ENCODE measurements at regions of chr2 and their contacts with region 1.

Region 1: GRCh38 chr2:46296840-46297545 is at the start of gene EPAS1:
- DNase-seq: peak; percentile 98
- total RNA-seq, gene EPAS1: 139 TPM

Region 2: DNA sequence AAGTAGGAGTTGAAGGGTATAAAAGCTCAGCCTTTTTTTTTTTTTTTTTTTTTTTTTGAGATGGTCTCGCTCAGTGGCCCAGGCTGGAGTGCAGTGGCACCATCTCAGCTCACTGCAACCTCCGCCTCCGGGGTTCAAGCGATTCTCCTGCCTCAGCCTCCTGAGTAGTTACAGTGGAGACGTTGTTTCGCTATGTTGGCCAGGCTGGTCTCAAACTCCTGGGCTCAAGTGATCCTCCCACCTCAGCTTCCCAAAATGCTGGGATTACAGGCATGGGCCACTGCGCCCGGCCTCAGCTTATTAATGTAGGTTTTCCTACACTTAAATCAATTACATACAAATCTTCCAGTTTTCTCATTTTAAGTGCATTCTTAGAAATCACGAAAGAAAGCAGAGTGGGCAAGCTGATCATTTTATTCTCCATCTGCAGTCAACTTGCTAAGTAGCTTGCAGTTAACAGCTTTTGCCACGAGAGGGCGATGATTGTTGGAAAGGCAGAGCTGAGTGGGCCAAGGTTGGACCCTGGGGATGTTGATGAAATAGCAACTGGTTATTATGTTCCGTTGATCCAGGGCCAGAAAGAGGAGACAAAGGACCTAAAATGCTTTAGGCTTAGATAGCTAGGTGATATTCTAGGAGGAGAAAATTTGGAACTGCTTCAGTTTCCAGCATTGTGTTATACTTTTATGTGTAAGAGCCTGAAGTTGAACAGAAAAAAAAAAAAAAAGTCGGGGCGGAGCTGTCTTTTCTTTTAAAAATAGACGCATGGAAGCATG is 234.2 kb before region 1 on chr2:
- intact Hi-C with region 1: loop called (anchors 5 kb)
- DNase-seq: peak; percentile 90

Region 3: DNA sequence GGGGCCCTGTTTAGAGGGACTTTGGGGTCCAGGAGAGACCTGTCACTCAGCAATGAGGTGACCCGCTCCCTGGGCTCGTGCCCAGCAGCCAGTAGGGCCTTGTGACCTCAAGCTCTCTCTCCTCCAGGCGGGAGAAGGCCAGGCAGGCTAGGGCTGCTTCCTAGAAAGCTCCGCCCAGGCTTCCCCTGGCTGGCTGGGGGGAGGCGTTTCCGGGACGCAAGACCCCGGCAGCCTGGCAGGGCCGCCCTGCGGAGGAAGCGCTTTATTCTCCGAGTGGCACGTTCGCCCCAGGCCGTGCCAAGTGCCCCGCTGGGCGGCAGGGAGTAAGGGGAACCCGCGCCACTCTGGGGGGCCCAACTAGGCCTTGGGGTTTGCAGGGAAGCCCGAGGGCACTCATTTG is 21.0 kb before region 1 on chr2:
- intact Hi-C with region 1: loop called (anchors 2 kb)
- DNase-seq: peak; percentile 81

Region 4: DNA sequence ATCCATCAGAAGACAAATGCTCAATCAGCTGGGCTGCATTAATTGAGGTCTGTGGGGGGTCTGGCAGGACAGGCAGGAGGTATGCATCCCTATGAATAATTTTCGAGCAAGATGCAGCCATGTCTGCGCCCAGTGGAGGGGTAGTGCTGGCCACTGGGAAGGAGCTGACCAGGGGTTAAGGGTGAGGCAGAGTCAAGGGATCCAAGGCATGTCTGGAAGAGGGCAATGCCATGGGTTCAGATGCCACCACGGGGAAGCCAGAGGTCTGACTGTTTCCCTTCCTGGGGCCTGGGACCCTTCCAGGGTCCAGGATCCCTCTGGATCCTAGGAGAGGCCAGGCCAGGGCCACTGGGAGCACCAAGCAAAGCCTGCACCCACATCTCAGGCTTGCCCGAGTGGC is 10.8 kb before region 1 on chr2:
- intact Hi-C with region 1: no loop called
- DNase-seq: no peak

Region 5: DNA sequence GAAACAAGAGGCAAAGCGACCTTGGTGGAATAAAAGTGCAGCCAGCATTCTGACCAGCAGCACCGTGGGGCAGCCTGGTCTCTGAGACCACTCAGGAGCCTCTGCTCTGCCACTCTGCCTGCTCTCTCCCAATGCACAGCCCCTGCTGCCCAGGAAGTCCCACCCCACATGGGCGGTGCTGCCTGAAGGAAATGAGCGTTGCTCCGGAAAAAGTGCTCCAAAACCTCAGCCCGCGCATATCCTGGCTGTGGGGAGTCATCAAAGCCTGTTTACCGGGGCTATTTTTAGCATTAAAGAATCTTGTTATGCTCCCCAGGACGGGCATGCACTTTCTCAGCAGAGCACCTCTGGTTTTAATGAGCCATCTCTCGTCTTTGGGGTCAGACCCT is 54.8 kb after region 1 on chr2:
- intact Hi-C with region 1: loop called (anchors 5 kb)
- DNase-seq: no peak

Region 6: DNA sequence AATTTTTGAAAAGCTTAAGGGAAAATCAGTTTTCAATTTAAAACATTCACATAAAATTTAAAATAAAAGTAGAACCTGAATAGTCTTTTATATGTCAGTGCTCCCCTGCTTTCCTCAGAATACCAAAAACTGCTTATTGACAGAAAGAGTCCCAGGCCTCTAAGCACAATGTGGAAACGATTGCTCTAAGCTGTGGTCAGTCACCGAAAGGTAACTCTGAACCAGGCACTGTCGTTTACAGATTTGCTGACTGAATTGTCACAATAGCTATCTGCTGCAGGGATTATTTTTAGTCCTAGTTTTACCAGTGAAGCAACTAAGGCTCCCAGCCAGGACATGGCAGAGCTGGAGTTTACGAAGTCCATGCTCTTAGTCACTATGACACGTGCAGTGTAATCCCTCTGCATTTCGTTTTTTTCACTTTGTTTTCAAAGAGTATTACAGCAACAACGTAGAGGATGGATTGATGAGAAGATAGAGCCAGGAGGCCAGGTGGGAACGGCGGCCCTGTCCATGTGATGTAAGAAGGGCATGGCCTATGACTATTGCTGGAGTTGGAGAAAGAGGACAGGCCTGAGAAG is 154.2 kb after region 1 on chr2:
- intact Hi-C with region 1: loop called (anchors 5 kb)
- DNase-seq: no peak

Measured in cardiac septum (tissue), 1 donor.